HCT116 (cell line): ENCODE measurements at regions of chr5 and their contacts with region 1.

Region 1: DNA sequence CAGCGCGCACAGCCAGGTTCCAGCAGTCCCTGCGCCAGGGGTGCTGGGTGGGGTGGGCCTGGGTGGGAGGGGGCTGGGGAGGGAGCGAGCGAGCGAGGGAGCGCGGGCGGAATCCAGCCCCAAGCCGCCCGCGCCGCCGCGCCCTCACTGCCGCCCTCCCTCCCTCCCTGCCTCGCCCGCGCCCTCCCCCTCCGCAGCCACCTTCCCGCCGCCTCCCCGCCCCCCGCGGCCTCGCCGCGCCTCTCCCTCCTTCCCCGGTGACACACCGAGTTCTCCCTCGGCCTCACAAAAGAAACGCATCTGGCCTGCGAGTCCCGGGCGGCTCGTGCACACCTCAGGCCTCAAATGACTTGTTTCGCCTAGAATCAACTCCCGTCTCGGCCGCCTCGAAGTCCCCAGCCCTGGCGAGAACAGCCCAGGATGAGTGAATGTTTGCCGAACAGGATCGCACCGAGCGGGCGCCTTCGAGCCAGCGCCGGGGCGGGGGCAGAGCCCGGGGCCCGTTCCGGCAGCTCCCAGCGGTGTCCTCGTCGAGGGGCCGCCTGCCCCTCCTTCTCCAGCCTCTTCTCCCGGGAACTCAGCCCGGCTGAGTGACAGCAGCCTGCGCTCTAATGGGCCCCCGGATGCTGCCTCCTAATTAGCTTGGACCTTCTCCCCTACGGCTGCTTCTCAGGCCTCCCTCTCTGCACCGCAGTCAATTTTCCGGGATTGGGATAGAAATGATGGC is 371 bp upstream of the PITX1 start:
- DNase-seq: peak; percentile 33
- ATAC-seq: peak; percentile 72
- H3K4me3 ChIP-seq: peak overlapping the region; percentile 92 to 100
- H3K27ac ChIP-seq: peak overlapping the region; percentile 91
- H3K4me1 ChIP-seq: peaks cover 16 to 38% of the 10 kb centered on the region in 2 experiments
- H3K27me3 ChIP-seq: no peaks in the 10 kb centered on the region
- CTCF ChIP-seq: no peak
- POLR2A ChIP-seq: peak; percentile 25
- RAD21 ChIP-seq: no peak

Region 2: GRCh38 chr5:134887593-134888159 is 146.7 kb before region 1 on chr5:
- CTCF ChIA-PET with region 1: no interaction called
- POLR2A ChIA-PET with region 1: no interaction called
- RAD21 ChIA-PET with region 1: no interaction called
- intact Hi-C with region 1: no loop called
- DNase-seq: no peak
- ATAC-seq: peak; percentile 25; the same call in 1 of the 2 replicates
- H3K4me3 ChIP-seq: no peak overlapping the region
- H3K27ac ChIP-seq: no peak overlapping the region
- H3K4me1 ChIP-seq: no peaks in the 10 kb centered on the region
- H3K27me3 ChIP-seq: no peaks in the 10 kb centered on the region
- CTCF ChIP-seq: no peak
- POLR2A ChIP-seq: no peak
- RAD21 ChIP-seq: no peak

Region 3: GRCh38 chr5:135047347-135047904 is 13.0 kb after region 1 on chr5:
- CTCF ChIA-PET with region 1: no interaction called
- POLR2A ChIA-PET with region 1: no interaction called
- RAD21 ChIA-PET with region 1: no interaction called
- intact Hi-C with region 1: no loop called
- DNase-seq: no peak
- ATAC-seq: no peak
- H3K4me3 ChIP-seq: no peak overlapping the region
- H3K27ac ChIP-seq: no peak overlapping the region
- H3K4me1 ChIP-seq: peaks cover 0 to 8% of the 10 kb centered on the region in 2 experiments; a peak in 1 of 4 replicates
- H3K27me3 ChIP-seq: no peaks in the 10 kb centered on the region
- CTCF ChIP-seq: no peak
- POLR2A ChIP-seq: no peak
- RAD21 ChIP-seq: no peak

Region 4: GRCh38 chr5:135139381-135140137 is 105.2 kb after region 1 on chr5:
- CTCF ChIA-PET with region 1: no interaction called
- POLR2A ChIA-PET with region 1: no interaction called
- RAD21 ChIA-PET with region 1: no interaction called
- intact Hi-C with region 1: loop called (anchors 2 kb)
- DNase-seq: peak; percentile 73
- ATAC-seq: peak; percentile 78
- H3K4me3 ChIP-seq: peak overlapping the region; percentile 12 to 23; a peak in 1 of 4 replicates
- H3K27ac ChIP-seq: peak overlapping the region; percentile 49
- H3K4me1 ChIP-seq: peaks cover 44 to 68% of the 10 kb centered on the region in 2 experiments
- H3K27me3 ChIP-seq: no peaks in the 10 kb centered on the region
- CTCF ChIP-seq: no peak
- POLR2A ChIP-seq: no peak
- RAD21 ChIP-seq: no peak

Region 5: DNA sequence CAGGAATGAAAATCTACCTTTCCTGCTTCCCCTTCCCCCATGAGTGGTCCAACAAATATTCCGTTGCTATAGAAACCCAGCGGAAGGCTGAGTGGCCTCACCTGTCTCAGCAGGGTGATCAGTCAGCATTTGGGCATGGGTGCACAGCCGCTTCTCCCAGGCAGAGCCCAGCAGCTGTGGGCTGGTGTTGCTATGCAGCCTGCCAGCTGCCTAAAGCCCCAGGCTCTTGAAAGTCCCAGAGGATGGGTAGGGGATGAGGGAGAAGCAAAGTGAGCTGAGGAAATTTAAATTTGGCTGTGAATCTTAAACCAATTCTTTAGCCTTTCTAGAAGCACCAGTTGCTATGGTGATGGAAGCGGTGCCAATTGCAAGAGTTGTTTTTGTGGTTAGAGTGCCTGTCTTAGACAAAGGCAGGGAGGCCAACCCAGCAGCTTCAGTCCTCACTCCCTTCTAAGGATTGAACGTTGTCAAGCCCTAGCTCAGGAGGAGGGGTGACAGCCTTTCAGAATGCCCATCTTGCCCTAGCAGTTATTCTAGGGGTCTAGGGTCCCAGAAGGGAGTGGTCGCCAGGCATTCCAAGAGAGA is 151.2 kb after region 1 on chr5:
- CTCF ChIA-PET with region 1: no interaction called
- POLR2A ChIA-PET with region 1: no interaction called
- RAD21 ChIA-PET with region 1: no interaction called
- intact Hi-C with region 1: loop called (anchors 5 kb)
- DNase-seq: no peak
- ATAC-seq: no peak
- H3K4me3 ChIP-seq: no peak overlapping the region
- H3K27ac ChIP-seq: no peak overlapping the region
- H3K4me1 ChIP-seq: peaks cover 0 to 5% of the 10 kb centered on the region in 2 experiments; a peak in 1 of 4 replicates
- H3K27me3 ChIP-seq: no peaks in the 10 kb centered on the region
- CTCF ChIP-seq: no peak
- POLR2A ChIP-seq: no peak
- RAD21 ChIP-seq: no peak

Region 6: GRCh38 chr5:135289651-135290050 is 255.3 kb after region 1 on chr5:
- CTCF ChIA-PET with region 1: no interaction called
- POLR2A ChIA-PET with region 1: no interaction called
- RAD21 ChIA-PET with region 1: no interaction called
- intact Hi-C with region 1: no loop called
- DNase-seq: no peak
- ATAC-seq: no peak
- H3K4me3 ChIP-seq: no peak overlapping the region
- H3K27ac ChIP-seq: no peak overlapping the region
- H3K4me1 ChIP-seq: no peaks in the 10 kb centered on the region
- H3K27me3 ChIP-seq: no peaks in the 10 kb centered on the region
- CTCF ChIP-seq: no peak
- POLR2A ChIP-seq: no peak
- RAD21 ChIP-seq: no peak